Sigmoid colon (tissue), 7 donors: ENCODE measurements at regions of chr7 and their contacts with region 1.

Region 1: GRCh38 chr7:42237162-42237821 is at the start of gene GLI3:
- DNase-seq: peak; percentile 98
- H3K4me3 ChIP-seq: peak within 1 kb of the TSS; percentile 67 to 88 (median 81)
- H3K27ac ChIP-seq: peak within 1 kb of the TSS; percentile 91 to 97 (median 96)
- H3K4me1 ChIP-seq: peaks cover 0 to 51% (median 41%) of the 10 kb centered on the region in 4 donors
- H3K27me3 ChIP-seq: no peaks in the 10 kb centered on the region
- CTCF ChIP-seq: peak in 2 of 4 experiments; percentile 15 to 20
- EP300 ChIP-seq: no peak
- POLR2A ChIP-seq: peak; percentile 21 to 30
- total RNA-seq, gene GLI3: 17.2 to 31.6 (median 18.9) TPM

Region 2: DNA sequence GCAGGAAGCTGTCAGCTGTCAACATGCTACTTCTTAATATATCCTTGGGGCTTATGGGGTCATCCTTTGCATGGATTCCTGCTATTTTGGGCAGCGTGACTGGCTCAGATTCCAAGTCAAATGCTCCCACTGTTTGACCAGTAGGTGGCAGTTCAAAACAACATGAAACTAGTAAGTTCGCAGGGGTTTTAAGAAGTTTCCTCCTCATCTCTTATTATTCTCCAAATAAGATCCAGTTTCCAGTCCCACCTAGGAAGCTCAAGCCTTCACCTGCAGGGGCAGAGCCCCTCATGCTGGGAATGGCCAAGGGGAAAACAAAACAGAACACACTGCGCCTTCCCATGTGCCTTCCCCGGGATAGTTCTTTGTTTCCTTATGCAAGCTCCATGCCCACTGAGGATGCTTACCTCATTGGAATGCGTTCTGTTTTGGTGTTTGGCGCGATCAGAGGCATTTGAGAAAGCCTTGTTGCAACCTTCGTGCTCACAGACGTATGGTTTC is 260.1 kb before region 1 on chr7:
- intact Hi-C with region 1: loop called (anchors 2 kb)
- DNase-seq: no peak
- H3K4me3 ChIP-seq: no peak overlapping the region
- H3K27ac ChIP-seq: peak overlapping the region in 3 of 4 donors; percentile 58 to 70 (median 65)
- H3K4me1 ChIP-seq: peaks cover 0 to 56% (median 52%) of the 10 kb centered on the region in 4 donors
- H3K27me3 ChIP-seq: no peaks in the 10 kb centered on the region
- CTCF ChIP-seq: peak; percentile 55 to 79 (median 62)
- EP300 ChIP-seq: no peak
- POLR2A ChIP-seq: no peak

Region 3: GRCh38 chr7:42262964-42263363 is 25.7 kb after region 1 on chr7:
- intact Hi-C with region 1: loop called (anchors 2 kb)
- DNase-seq: peak; percentile 89
- H3K4me3 ChIP-seq: no peak overlapping the region
- H3K27ac ChIP-seq: peak overlapping the region in 3 of 4 donors; percentile 48 to 70 (median 65)
- H3K4me1 ChIP-seq: peaks cover 0 to 19% (median 12%) of the 10 kb centered on the region in 4 donors
- H3K27me3 ChIP-seq: no peaks in the 10 kb centered on the region
- CTCF ChIP-seq: no peak
- EP300 ChIP-seq: peak in 1 of 4 donors; percentile 47
- POLR2A ChIP-seq: no peak

Region 4: GRCh38 chr7:42493436-42494238 is 256.3 kb after region 1 on chr7:
- intact Hi-C with region 1: loop called (anchors 2 kb)
- DNase-seq: peak; percentile 94
- H3K4me3 ChIP-seq: peak overlapping the region; percentile 41 to 59 (median 54)
- H3K27ac ChIP-seq: peak overlapping the region; percentile 69 to 92 (median 88)
- H3K4me1 ChIP-seq: peaks cover 0 to 63% (median 46%) of the 10 kb centered on the region in 4 donors
- H3K27me3 ChIP-seq: no peaks in the 10 kb centered on the region
- CTCF ChIP-seq: no peak
- EP300 ChIP-seq: peak in 3 of 4 donors; percentile 51 to 86 (median 83)
- POLR2A ChIP-seq: no peak

Region 5: GRCh38 chr7:42690794-42691639 is 453.7 kb after region 1 on chr7:
- intact Hi-C with region 1: loop called (anchors 5 kb)
- DNase-seq: no peak
- H3K4me3 ChIP-seq: no peak overlapping the region
- H3K27ac ChIP-seq: peak overlapping the region in 3 of 4 donors; percentile 57 to 67 (median 58)
- H3K4me1 ChIP-seq: peaks cover 0 to 64% (median 44%) of the 10 kb centered on the region in 4 donors
- H3K27me3 ChIP-seq: no peaks in the 10 kb centered on the region
- CTCF ChIP-seq: peak; percentile 56 to 73 (median 60)
- EP300 ChIP-seq: no peak
- POLR2A ChIP-seq: no peak